ENCODE measurements at regions of chr1 and their contacts with region 1.

Region 1: DNA sequence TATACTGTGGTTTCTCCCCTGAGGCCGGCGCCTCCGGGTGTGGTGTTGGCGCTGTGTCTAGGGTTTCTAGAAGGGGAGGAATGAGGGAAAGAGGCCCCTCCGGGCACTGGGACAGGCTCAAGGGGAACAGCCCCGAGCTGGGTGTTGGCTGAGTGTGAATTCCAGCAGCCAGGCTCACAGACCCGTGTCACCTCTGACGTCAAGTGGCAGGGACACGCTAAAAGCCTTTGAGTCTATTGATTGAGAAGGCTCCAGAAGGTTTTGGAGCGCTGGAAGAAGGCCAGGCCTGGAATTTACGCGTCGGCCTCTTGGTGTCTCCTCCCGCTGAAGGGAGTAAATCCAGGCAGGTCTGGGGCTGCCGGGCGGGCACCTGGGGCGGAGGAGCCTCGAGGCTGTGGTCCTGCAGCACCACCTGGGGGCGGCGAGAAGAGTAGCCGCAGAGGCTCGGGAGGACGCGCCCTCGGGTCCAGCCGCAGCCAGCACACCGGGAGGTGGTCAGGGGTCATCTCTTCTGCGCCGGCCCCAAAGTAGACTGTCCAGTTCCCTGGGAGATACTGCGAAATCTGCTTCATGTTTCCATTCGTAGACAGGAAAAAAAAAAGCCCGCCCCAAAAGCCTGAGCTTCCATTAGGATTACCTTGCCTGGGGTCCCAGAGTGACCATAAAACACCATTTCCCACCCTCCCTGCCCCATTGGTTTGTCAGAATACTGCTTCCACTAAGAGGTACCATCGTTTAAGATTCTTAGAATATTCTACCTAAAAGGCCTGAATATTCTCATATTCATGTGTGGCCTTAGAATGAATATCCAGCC is 61.7 kb downstream of the TLR5 start:
- DNase-seq: no peak
- H3K4me3 ChIP-seq: peak overlapping the region; percentile 16 to 66 (median 44)
- H3K27ac ChIP-seq: peak overlapping the region; percentile 58 to 75 (median 65)
- H3K4me1 ChIP-seq: peaks cover 0 to 21% (median 0%) of the 10 kb centered on the region in 3 donors
- H3K27me3 ChIP-seq: no peaks in the 10 kb centered on the region
- CTCF ChIP-seq: peak; percentile 86 to 98 (median 94)
- POLR2A ChIP-seq: no peak

Region 2: DNA sequence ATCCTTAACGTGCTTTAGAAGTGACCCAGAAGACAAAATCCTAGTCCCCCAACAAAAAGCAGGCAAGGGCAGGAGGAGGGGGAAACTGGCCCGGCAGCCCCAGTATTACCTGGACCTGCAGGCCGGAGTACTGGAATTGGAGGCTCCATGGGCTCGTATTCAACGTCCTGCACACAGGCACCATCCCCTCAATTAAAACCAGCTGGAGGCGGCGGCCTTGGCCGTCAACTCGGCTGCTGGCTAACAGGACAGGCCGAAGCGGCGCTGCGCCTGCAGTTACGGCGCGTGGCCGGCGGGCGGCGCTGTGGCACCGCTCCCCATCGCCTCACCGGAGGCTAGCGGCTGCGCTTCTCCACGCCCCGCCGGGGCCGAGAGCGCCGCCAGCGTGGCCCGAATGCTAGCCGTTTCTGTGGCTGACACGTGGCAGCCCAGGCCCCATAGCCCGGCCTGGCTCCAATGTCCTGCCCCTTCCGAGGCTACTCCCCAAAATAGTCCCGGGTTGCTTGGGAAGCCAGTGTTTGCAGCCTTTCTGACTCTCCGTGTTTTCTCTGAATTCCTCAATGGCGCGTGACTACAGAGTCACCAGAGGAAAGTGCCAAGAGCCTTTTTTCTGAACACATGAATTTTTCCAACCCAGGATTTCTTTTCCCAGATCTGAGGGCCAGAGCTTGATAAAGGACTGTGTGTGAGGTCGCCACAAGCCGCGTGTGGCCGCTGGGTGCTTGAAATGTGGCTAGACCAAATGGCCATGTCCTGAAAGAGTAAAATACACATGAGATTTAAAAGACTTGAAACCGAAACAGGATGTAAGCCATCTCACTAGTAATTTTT is 616.0 kb before region 1 on chr1:
- intact Hi-C with region 1: loop called (anchors 10 kb)
- DNase-seq: peak; percentile 53
- H3K4me3 ChIP-seq: peak overlapping the region; percentile 21 to 58 (median 45)
- H3K27ac ChIP-seq: peak overlapping the region; percentile 46 to 82 (median 78)
- H3K4me1 ChIP-seq: peaks cover 4 to 20% (median 5%) of the 10 kb centered on the region in 3 donors
- H3K27me3 ChIP-seq: no peaks in the 10 kb centered on the region
- CTCF ChIP-seq: peak; percentile 99 to 100 (median 100)
- POLR2A ChIP-seq: peak in 1 of 4 donors; percentile 23

Region 3: DNA sequence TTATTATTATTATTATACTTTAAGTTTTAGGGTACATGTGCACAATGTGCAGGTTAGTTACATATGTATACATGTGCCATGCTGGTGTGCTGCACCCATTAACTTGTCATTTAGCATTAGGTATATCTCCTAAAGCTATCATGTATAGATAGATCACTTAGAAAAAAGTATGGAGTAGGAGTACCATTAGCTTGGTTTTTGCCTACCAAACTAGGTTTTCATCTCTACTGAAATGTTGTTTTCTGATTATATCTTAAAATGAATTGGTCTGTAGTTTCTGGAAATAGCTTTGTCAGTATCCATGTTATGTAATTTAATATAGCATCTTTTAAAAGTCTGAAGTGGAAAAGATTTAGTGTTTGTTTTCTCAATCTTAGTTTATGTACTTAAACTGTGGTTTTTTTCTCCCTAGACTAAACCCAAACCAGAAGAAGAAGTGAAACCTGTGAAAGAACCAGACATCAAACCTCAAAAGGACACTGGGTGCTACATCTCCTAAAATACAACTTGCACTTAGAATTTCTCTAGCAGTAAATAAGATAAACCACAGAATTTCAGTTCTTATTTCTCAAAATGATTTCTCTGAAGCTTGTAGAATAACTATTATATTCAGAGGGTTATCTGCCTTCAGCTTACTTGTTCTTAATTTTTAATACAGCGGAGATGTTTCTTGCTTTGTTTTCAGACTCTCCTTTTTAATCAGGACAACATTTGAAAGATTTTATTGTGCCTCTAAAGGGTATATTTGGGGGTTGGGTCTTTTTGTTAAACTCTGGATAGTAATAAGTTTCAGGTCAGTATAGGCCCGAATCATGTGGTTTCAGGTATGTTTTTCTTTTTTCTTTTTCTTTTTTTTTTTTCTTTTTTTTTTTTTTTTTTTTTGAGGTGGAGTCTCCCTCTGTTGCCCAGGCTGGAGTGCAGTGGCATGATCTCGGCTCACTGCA is 348.9 kb before region 1 on chr1:
- intact Hi-C with region 1: loop called (anchors 10 kb)
- DNase-seq: no peak
- H3K4me3 ChIP-seq: no peak overlapping the region
- H3K27ac ChIP-seq: no peak overlapping the region
- H3K4me1 ChIP-seq: peaks cover 0 to 13% (median 0%) of the 10 kb centered on the region in 3 donors
- H3K27me3 ChIP-seq: no peaks in the 10 kb centered on the region
- CTCF ChIP-seq: no peak
- POLR2A ChIP-seq: no peak

Region 4: GRCh38 chr1:222792744-222793143 is 288.6 kb before region 1 on chr1:
- intact Hi-C with region 1: loop called (anchors 5 kb)
- DNase-seq: no peak
- H3K4me3 ChIP-seq: no peak overlapping the region
- H3K27ac ChIP-seq: no peak overlapping the region
- H3K4me1 ChIP-seq: peaks cover 0 to 14% (median 0%) of the 10 kb centered on the region in 3 donors
- H3K27me3 ChIP-seq: no peaks in the 10 kb centered on the region
- CTCF ChIP-seq: peak in 5 of 6 experiments; percentile 40 to 52 (median 44)
- POLR2A ChIP-seq: no peak

Region 5: DNA sequence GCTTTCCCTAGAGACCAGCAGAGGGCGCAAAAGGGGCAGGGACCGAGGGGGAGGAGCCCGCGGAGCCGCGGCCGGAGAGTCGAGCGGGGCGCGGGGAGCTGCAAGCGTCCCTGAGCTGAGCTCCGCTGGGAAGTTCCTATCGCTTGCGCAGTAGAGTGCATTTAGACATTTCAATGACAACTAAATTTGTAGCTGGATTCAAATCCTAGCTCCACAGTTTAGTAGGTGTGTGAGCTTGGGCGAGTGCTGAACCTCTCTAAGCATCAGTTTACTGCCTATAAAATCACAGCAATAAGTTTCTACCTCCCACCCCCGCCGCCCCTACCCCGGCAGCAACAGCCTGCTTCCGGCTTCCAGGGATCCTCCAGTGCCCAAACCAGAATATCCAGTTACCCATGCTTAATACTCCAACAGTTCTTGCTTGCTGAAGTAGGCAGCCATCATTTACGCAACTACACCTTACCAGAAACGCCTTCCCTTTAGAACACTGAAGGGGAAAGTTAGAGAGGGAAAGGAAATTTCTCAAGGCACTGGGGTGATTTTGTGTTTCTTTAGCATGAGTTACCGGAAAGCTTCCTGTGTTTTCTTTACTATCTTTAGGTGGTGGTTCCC is 52.5 kb after region 1 on chr1:
- intact Hi-C with region 1: no loop called
- DNase-seq: peak; percentile 22
- H3K4me3 ChIP-seq: peak overlapping the region in 3 of 4 donors; percentile 38 to 60 (median 42)
- H3K27ac ChIP-seq: peak overlapping the region; percentile 75 to 89 (median 79)
- H3K4me1 ChIP-seq: peaks cover 39 to 61% (median 41%) of the 10 kb centered on the region in 3 donors
- H3K27me3 ChIP-seq: no peaks in the 10 kb centered on the region
- CTCF ChIP-seq: peak; percentile 91 to 97 (median 96)
- POLR2A ChIP-seq: no peak

Measured in esophagus squamous epithelium (tissue), 5 donors.